OCI-LY7 (cell line): ENCODE measurements at regions of chr13 and their contacts with region 1.

Region 1: GRCh38 chr13:114065141-114065925 is 67.1 kb downstream of the RASA3 start:
- DNase-seq: no peak
- H3K4me3 ChIP-seq: no peak overlapping the region
- H3K27ac ChIP-seq: no peak overlapping the region
- H3K4me1 ChIP-seq: peaks cover 42% of the 10 kb centered on the region
- CTCF ChIP-seq: no peak

Region 2: DNA sequence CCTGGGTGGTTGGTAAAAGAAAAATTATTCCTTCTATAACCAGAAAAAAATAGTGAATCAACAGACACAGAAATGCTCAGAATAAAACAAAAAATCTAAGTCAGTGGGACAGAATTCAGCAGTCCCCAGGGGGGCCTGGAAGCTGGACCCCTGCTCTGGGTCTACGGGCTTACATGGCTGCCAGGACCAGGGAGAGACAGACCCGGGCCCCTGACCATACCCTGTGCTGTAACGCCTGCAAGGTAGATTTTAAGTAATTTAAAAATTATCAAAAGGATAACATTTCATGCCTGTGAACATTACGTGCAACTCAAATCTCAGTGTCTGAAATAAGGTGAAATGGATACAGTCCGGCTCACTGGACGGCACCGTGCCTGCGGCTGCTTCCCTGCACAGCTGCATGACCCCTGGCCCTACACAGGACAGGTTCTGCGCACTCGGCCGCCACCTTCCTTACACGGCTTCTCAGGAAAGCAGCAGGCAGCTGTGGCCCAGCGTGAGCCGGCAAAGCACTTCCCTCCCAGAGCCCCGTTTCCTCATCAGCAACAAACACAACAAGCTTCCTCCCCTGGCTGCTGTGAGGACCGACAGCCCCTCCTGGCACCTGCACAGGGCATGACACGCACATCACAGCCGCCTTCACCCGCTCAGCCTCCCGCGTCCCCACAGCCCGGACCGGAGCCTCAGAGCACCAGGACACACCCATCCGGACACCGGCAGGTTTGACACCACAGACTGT is 44.9 kb after region 1 on chr13:
- CTCF ChIA-PET with region 1: no interaction called
- POLR2A ChIA-PET with region 1: no interaction called
- intact Hi-C with region 1: loop called (anchors 1 kb)
- DNase-seq: peak; percentile 84
- H3K4me3 ChIP-seq: peak overlapping the region; percentile 14
- H3K27ac ChIP-seq: peak overlapping the region; percentile 55
- H3K4me1 ChIP-seq: peaks cover 29% of the 10 kb centered on the region
- CTCF ChIP-seq: peak; percentile 54